CD4-positive, alpha-beta T cell (primary cell): ENCODE measurements at regions of chr10 and their contacts with region 1.

Region 1: GRCh38 chr10:122374237-122374869 is at the start of gene PLEKHA1:
- DNase-seq: peak; percentile 85 to 96 (median 92)
- ATAC-seq: peak; percentile 91
- H3K4me3 ChIP-seq: peak within 1 kb of the TSS; percentile 91
- H3K4me3 Mint-ChIP-seq: peak within 1 kb of the TSS; percentile 93
- H3K27ac ChIP-seq: peak within 1 kb of the TSS; percentile 83 to 87
- H3K27ac Mint-ChIP-seq: peak within 1 kb of the TSS; percentile 94
- H3K4me1 ChIP-seq: peaks cover 26% of the 10 kb centered on the region
- H3K4me1 Mint-ChIP-seq: peaks cover 49% of the 10 kb centered on the region
- H3K27me3 ChIP-seq: peaks cover 0 to 8% of the 10 kb centered on the region in 2 experiments
- H3K27me3 Mint-ChIP-seq: peaks cover 10% of the 10 kb centered on the region
- CTCF ChIP-seq: no peak
- total RNA-seq, gene PLEKHA1: 24.9 to 26.8 TPM

Region 2: GRCh38 chr10:121974535-121975294 is 399.6 kb before region 1 on chr10 and contains the start of gene NSMCE4A:
- CTCF ChIA-PET with region 1: interaction called, 3 read pairs
- POLR2A ChIA-PET with region 1: no interaction called
- intact Hi-C with region 1: loop called in 1 of 2 experiments (anchors 10 kb)
- DNase-seq: peak; percentile 49 to 83 (median 66)
- ATAC-seq: peak; percentile 85
- H3K4me3 ChIP-seq: peak within 1 kb of the TSS; percentile 63
- H3K4me3 Mint-ChIP-seq: peak within 1 kb of the TSS; percentile 87
- H3K27ac ChIP-seq: peak within 1 kb of the TSS; percentile 31 to 40
- H3K27ac Mint-ChIP-seq: peak within 1 kb of the TSS; percentile 36
- H3K4me1 ChIP-seq: peaks cover 21% of the 10 kb centered on the region
- H3K4me1 Mint-ChIP-seq: peaks cover 19% of the 10 kb centered on the region
- H3K27me3 ChIP-seq: no peaks in the 10 kb centered on the region
- H3K27me3 Mint-ChIP-seq: no peaks in the 10 kb centered on the region
- CTCF ChIP-seq: no peak
- total RNA-seq, gene NSMCE4A: 34.2 to 36.5 TPM

Region 3: DNA sequence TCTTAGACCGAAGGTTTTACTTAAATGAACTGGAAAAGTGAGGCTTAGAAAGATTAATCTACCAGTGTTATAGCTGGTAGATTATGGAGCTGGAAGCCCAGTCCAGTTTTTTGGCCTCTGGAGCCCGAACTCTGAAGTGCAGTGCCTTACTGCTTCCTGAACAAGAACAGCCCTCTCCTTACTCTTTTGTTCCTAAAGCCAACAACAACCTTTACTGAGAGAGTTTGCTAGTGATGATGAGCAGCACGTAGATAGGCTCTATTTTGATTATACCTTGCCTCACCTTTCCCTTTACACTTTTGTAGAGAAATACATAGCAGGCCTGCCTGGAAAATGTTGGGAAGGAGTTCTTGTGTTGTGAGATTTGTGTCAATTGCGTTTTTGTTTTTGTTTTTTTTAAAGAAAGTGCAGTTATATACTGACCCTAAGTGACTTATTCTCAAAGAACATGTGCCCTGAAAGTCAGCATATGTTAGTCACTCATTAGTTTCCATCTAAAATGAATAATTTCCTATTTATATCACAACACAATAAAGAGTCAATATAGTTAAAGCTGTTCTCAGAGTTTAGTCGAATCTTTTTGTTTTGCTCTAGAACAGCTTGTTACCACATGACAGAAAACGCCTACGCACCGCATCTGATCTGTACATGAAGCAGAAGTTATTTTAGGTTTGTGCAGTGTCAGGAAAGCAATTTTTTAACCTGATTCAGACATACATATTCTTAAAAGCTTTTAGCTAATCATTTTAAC is 33.2 kb after region 1 on chr10:
- CTCF ChIA-PET with region 1: interaction called, 3 read pairs
- POLR2A ChIA-PET with region 1: interaction called, 23 read pairs
- intact Hi-C with region 1: no loop called
- DNase-seq: peak in 8 of 14 experiments; percentile 19 to 76 (median 41)
- ATAC-seq: peak; percentile 88
- H3K4me3 ChIP-seq: no peak overlapping the region
- H3K4me3 Mint-ChIP-seq: peak overlapping the region; percentile 27
- H3K27ac ChIP-seq: peak overlapping the region; percentile 11 to 37
- H3K27ac Mint-ChIP-seq: no peak overlapping the region
- H3K4me1 ChIP-seq: peaks cover 22% of the 10 kb centered on the region
- H3K4me1 Mint-ChIP-seq: peaks cover 53% of the 10 kb centered on the region
- H3K27me3 ChIP-seq: no peaks in the 10 kb centered on the region
- H3K27me3 Mint-ChIP-seq: no peaks in the 10 kb centered on the region
- CTCF ChIP-seq: no peak

Region 4: GRCh38 chr10:122435212-122435827 is 61.0 kb after region 1 on chr10:
- CTCF ChIA-PET with region 1: interaction called, 3 read pairs
- POLR2A ChIA-PET with region 1: interaction called, 16 read pairs
- intact Hi-C with region 1: loop called in 1 of 2 experiments (anchors 2 kb)
- DNase-seq: peak in 3 of 14 experiments; percentile 71 to 77 (median 73)
- ATAC-seq: peak; percentile 49
- H3K4me3 ChIP-seq: no peak overlapping the region
- H3K4me3 Mint-ChIP-seq: no peak overlapping the region
- H3K27ac ChIP-seq: no peak overlapping the region
- H3K27ac Mint-ChIP-seq: peak overlapping the region; percentile 58
- H3K4me1 ChIP-seq: no peaks in the 10 kb centered on the region
- H3K4me1 Mint-ChIP-seq: peaks cover 12% of the 10 kb centered on the region
- H3K27me3 ChIP-seq: no peaks in the 10 kb centered on the region
- H3K27me3 Mint-ChIP-seq: no peaks in the 10 kb centered on the region
- CTCF ChIP-seq: peak; percentile 81

Region 5: GRCh38 chr10:122953827-122954730 is 579.7 kb after region 1 on chr10 and contains the start of gene C10orf88:
- CTCF ChIA-PET with region 1: no interaction called
- POLR2A ChIA-PET with region 1: no interaction called
- intact Hi-C with region 1: loop called in 1 of 2 experiments (anchors 10 kb)
- DNase-seq: peak; percentile 94 to 100 (median 97)
- ATAC-seq: peak; percentile 93
- H3K4me3 ChIP-seq: peak within 1 kb of the TSS; percentile 84
- H3K4me3 Mint-ChIP-seq: peak within 1 kb of the TSS; percentile 94
- H3K27ac ChIP-seq: no peak within 1 kb of the TSS
- H3K27ac Mint-ChIP-seq: peak within 1 kb of the TSS; percentile 82
- H3K4me1 ChIP-seq: peaks cover 23% of the 10 kb centered on the region
- H3K4me1 Mint-ChIP-seq: peaks cover 40% of the 10 kb centered on the region
- H3K27me3 ChIP-seq: no peaks in the 10 kb centered on the region
- H3K27me3 Mint-ChIP-seq: no peaks in the 10 kb centered on the region
- CTCF ChIP-seq: no peak
- total RNA-seq, gene C10orf88: 2.3 to 2.5 TPM

Region 6: DNA sequence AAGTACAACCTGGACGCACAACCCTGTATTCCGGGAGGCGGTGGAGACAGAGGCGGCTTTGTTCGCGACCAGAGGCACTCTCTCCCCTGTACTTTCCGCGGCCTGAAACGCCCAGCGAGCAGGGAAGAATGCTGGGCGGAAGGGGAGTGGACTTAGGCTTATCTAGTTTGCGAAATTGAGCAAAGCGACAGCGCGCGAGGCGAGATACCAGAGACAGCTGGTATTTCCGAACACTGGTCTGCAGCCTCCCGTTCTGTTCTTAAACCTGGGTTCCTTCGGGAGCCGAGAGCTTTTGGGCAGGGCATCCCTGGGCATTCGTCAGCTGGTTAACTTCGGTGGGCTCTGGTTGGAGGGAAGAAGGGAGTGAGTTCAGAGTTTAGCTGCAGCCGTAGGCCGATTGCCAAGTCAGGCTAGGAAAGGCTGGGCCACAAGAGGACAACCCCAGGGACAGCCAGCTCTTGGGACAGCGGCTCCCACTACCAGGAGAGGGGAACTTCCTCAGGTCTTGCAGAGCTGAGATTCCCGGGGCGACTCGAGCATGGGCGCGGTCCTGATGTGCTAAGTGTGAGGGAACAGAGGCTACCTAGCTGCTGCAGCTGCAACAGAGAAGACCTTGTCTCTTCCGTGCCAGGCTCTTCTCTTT is 765.3 kb after region 1 on chr10:
- CTCF ChIA-PET with region 1: no interaction called
- POLR2A ChIA-PET with region 1: no interaction called
- intact Hi-C with region 1: loop called in 1 of 2 experiments (anchors 5 kb)
- DNase-seq: no peak
- ATAC-seq: no peak
- H3K4me3 ChIP-seq: no peak overlapping the region
- H3K4me3 Mint-ChIP-seq: peak overlapping the region; percentile 21
- H3K27ac ChIP-seq: no peak overlapping the region
- H3K27ac Mint-ChIP-seq: no peak overlapping the region
- H3K4me1 ChIP-seq: peaks cover 70% of the 10 kb centered on the region
- H3K4me1 Mint-ChIP-seq: peaks cover 65% of the 10 kb centered on the region
- H3K27me3 ChIP-seq: peaks cover 89 to 97% of the 10 kb centered on the region in 2 experiments
- H3K27me3 Mint-ChIP-seq: peaks cover 90% of the 10 kb centered on the region
- CTCF ChIP-seq: no peak